CD4-positive, alpha-beta T cell (primary cell): ENCODE measurements at regions of chr1 and their contacts with region 1.

Region 1: DNA sequence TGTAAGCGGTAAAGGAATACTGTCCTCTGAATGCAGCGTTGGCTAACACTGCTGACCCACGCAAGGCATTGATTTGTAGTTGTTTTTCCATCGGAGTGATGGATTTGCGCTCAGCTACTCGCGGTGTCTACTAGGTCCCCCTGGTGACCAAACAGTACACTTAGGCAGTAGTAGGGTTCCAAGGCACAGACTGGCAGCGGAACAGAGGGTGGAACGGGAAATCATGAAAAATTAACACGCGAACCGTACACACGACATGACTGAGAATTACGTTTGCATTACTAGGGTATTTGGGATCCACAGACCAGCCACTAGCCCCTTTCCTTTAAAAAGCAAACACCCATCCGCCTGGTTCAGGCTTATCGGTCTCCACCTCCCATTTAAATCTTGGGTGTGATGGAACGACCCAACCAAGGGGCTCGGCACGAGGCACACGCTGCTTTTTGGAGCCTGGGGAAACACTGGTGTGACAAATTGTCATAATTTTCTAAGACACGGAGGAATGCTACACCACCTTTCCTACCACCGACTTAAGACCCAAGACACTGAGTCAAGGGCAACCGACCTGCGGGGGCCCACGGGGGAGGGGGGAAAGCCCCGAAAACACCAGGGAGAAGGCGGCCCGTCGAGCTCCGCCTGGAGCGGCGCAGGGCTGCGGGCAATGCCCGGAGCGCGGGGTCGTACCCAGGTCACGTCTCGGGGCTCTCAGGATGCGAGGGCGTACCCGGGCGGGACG is 699 bp downstream of the DIPK1A start:
- DNase-seq: peak; percentile 44 to 90 (median 57)
- ATAC-seq: peak; percentile 53
- H3K4me3 ChIP-seq: peak overlapping the region; percentile 88
- H3K4me3 Mint-ChIP-seq: peak overlapping the region; percentile 96
- H3K27ac ChIP-seq: peak overlapping the region; percentile 85 to 99
- H3K27ac Mint-ChIP-seq: peak overlapping the region; percentile 99
- H3K4me1 ChIP-seq: peaks cover 66% of the 10 kb centered on the region
- H3K4me1 Mint-ChIP-seq: peaks cover 43% of the 10 kb centered on the region
- H3K27me3 ChIP-seq: no peaks in the 10 kb centered on the region
- H3K27me3 Mint-ChIP-seq: no peaks in the 10 kb centered on the region
- CTCF ChIP-seq: peak; percentile 78

Region 2: DNA sequence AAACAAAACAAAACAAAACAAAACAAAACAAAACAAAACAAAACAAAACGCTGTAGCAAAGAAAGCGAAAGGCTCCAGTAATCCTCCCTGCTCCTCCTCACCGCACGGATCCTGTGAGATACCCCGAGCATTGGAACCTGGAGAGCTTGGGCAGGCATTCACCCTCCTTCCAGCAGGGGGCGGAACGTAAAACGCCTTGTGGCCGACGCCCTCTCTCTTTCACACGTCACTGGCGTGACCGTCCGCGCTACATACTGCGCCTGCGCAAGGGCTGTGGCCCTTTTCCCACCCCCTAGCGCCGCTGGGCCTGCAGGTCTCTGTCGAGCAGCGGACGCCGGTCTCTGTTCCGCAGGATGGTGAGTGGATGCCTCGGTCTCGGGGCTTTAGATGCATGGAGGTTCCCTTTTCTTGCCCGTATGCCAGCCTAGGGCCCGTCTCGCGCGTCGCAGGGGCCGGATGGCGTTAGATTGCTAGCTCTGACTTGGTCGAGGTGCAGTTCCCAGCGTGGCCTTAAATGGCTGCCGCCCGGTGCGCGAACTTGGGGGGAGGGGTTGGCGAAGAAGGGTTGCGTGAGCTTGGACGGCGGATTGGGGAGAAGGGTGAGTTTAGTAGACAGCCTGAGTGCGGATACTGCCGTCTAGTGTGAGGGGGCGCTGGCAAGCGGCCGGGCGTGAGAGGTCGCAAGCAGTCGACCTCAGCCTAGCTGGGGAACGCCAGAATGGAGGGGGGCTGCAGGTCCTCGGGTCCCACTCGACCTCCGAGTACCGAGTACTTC is 128.6 kb before region 1 on chr1 and contains the start of gene RPL5:
- CTCF ChIA-PET with region 1: interaction called, 31 read pairs
- POLR2A ChIA-PET with region 1: interaction called, 55 read pairs
- intact Hi-C with region 1: no loop called
- DNase-seq: peak; percentile 94 to 99 (median 96)
- ATAC-seq: peak; percentile 81
- H3K4me3 ChIP-seq: peak within 1 kb of the TSS; percentile 68
- H3K4me3 Mint-ChIP-seq: peak within 1 kb of the TSS; percentile 96
- H3K27ac ChIP-seq: peak within 1 kb of the TSS; percentile 85 to 92
- H3K27ac Mint-ChIP-seq: peak within 1 kb of the TSS; percentile 97
- H3K4me1 ChIP-seq: peaks cover 31% of the 10 kb centered on the region
- H3K4me1 Mint-ChIP-seq: peaks cover 54% of the 10 kb centered on the region
- H3K27me3 ChIP-seq: no peaks in the 10 kb centered on the region
- H3K27me3 Mint-ChIP-seq: no peaks in the 10 kb centered on the region
- CTCF ChIP-seq: peak; percentile 97
- total RNA-seq, gene RPL5: 1,712 to 1,770 TPM

Region 3: DNA sequence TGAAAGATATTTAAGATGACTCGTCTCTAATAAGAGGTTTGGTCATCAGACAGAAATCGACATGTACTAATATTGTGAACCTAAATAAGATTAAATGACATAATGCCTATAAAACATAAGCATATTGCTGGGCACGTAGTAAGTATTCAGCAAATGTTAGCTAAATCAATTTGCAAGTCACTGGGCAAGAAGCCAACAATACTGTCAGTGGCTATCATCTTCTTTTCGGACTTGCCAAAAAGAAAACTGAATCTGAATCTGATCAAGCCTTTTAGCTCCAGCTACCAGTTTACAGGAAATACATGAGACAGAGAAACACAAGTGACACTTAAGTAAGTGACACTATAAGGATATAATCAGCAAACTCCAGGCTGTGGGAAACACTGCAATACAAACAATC is 82.8 kb before region 1 on chr1:
- CTCF ChIA-PET with region 1: interaction called, 8 read pairs
- POLR2A ChIA-PET with region 1: interaction called, 34 read pairs
- intact Hi-C with region 1: loop called in 1 of 2 experiments (anchors 5 kb)
- DNase-seq: peak in 2 of 14 experiments; percentile 24 to 53
- ATAC-seq: peak; percentile 41
- H3K4me3 ChIP-seq: no peak overlapping the region
- H3K4me3 Mint-ChIP-seq: peak overlapping the region; percentile 23
- H3K27ac ChIP-seq: peak overlapping the region; percentile 19 to 33
- H3K27ac Mint-ChIP-seq: peak overlapping the region; percentile 86
- H3K4me1 ChIP-seq: peaks cover 7% of the 10 kb centered on the region
- H3K4me1 Mint-ChIP-seq: peaks cover 43% of the 10 kb centered on the region
- H3K27me3 ChIP-seq: no peaks in the 10 kb centered on the region
- H3K27me3 Mint-ChIP-seq: no peaks in the 10 kb centered on the region
- CTCF ChIP-seq: no peak

Region 4: GRCh38 chr1:92975551-92976232 is 15.1 kb after region 1 on chr1:
- CTCF ChIA-PET with region 1: interaction called, 8 read pairs
- POLR2A ChIA-PET with region 1: interaction called, 159 read pairs
- intact Hi-C with region 1: no loop called
- DNase-seq: peak in 1 of 14 experiments; percentile 45
- ATAC-seq: no peak
- H3K4me3 ChIP-seq: no peak overlapping the region
- H3K4me3 Mint-ChIP-seq: no peak overlapping the region
- H3K27ac ChIP-seq: no peak overlapping the region
- H3K27ac Mint-ChIP-seq: peak overlapping the region; percentile 1
- H3K4me1 ChIP-seq: peaks cover 56% of the 10 kb centered on the region
- H3K4me1 Mint-ChIP-seq: peaks cover 43% of the 10 kb centered on the region
- H3K27me3 ChIP-seq: no peaks in the 10 kb centered on the region
- H3K27me3 Mint-ChIP-seq: no peaks in the 10 kb centered on the region
- CTCF ChIP-seq: no peak

Region 5: DNA sequence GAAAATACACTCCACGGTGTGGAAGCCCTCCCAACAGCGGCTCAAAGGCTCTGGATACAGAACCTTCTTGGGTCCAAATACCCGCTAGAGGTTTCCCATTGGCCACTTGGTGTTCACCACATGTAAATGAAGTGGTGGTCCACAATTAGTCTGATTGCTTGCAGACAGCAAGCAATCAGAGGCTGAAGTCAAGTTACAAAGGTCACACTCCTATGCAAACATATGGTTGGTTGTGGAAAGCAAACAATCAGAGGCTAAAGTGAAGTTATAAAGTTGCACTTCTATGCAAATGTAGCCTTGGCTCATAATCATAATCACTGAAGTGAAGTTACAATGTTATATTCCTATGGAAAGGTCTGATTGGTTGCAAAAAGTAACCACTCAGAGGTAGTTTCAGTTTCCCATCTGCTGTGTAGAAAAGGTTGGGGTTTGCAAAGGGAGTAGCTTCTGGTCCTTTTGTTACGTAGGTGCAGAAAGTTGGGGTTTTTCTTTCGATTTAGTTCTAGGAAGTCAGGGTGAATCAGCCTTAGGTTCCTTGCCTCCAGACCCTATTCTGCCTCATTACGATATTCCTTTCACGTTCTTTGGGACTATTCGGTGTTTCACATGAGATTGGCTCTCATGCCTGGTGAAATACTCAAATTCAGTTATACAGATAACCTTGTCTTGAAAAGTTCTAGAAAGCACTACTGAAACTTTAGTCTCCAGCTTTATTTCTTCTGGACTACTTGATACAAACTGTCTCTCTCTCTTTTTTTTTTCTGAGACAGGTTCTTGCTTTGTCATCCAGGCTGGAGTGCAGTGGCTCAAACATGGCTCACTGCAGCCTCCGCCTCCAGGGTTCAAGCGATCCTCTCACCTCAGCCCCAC is 81.9 kb after region 1 on chr1:
- CTCF ChIA-PET with region 1: no interaction called
- POLR2A ChIA-PET with region 1: interaction called, 12 read pairs
- intact Hi-C with region 1: no loop called
- DNase-seq: peak in 6 of 14 experiments; percentile 2 to 93 (median 62)
- ATAC-seq: peak; percentile 98
- H3K4me3 ChIP-seq: peak overlapping the region; percentile 45
- H3K4me3 Mint-ChIP-seq: peak overlapping the region; percentile 66
- H3K27ac ChIP-seq: peak overlapping the region; percentile 75 to 85
- H3K27ac Mint-ChIP-seq: peak overlapping the region; percentile 84
- H3K4me1 ChIP-seq: peaks cover 10% of the 10 kb centered on the region
- H3K4me1 Mint-ChIP-seq: peaks cover 16% of the 10 kb centered on the region
- H3K27me3 ChIP-seq: no peaks in the 10 kb centered on the region
- H3K27me3 Mint-ChIP-seq: no peaks in the 10 kb centered on the region
- CTCF ChIP-seq: no peak

Region 6: GRCh38 chr1:93345633-93346420 is 385.3 kb after region 1 on chr1 and contains the start of gene DR1:
- CTCF ChIA-PET with region 1: no interaction called
- POLR2A ChIA-PET with region 1: interaction called, 10 read pairs
- intact Hi-C with region 1: no loop called
- DNase-seq: peak; percentile 85 to 94 (median 87)
- ATAC-seq: peak; percentile 79
- H3K4me3 ChIP-seq: peak within 1 kb of the TSS; percentile 90
- H3K4me3 Mint-ChIP-seq: peak within 1 kb of the TSS; percentile 99
- H3K27ac ChIP-seq: peak within 1 kb of the TSS; percentile 87 to 94
- H3K27ac Mint-ChIP-seq: peak within 1 kb of the TSS; percentile 96
- H3K4me1 ChIP-seq: peaks cover 9% of the 10 kb centered on the region
- H3K4me1 Mint-ChIP-seq: peaks cover 61% of the 10 kb centered on the region
- H3K27me3 ChIP-seq: no peaks in the 10 kb centered on the region
- H3K27me3 Mint-ChIP-seq: no peaks in the 10 kb centered on the region
- CTCF ChIP-seq: no peak
- total RNA-seq, gene DR1: 51.4 to 54.4 TPM